Prostate gland (tissue), 2 donors: ENCODE measurements at regions of chr9 and their contacts with region 1.

Region 1: GRCh38 chr9:72827950-72828731 is 124.7 kb downstream of the ALDH1A1 start:
- DNase-seq: no peak
- H3K4me3 ChIP-seq: no peak overlapping the region
- H3K27ac ChIP-seq: no peak overlapping the region
- H3K4me1 ChIP-seq: no peaks in the 10 kb centered on the region
- H3K27me3 ChIP-seq: no peaks in the 10 kb centered on the region
- CTCF ChIP-seq: no peak
- POLR2A ChIP-seq: no peak

Region 2: DNA sequence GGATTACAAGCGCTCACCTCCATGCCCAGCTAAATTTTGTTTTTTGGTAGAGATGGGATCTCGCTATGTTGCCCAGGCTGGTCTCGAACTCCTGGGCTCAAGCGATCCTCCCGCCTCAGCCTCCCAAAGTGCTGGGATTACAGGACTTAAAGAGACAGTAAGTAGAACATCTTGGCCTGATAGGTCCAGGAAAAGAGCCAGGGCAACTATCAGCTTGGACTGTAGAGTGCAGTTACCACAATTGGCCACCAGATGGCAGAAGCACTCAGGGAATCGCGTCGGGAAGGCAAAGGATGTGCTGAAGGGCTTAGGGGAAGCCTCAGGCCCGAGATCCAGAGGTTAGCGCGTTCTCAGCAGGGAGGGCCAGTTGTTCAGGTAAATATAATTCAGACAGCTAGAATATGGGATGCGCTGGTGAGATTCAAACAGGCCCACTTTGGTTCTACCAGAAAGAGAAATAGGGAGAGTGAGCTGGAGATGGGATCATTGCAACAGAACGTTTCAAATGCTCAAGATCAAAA is 789.2 kb before region 1 on chr9:
- intact Hi-C with region 1: loop called (anchors 10 kb)
- DNase-seq: peak; percentile 65
- H3K4me3 ChIP-seq: no peak overlapping the region
- H3K27ac ChIP-seq: no peak overlapping the region
- H3K4me1 ChIP-seq: no peaks in the 10 kb centered on the region
- H3K27me3 ChIP-seq: no peaks in the 10 kb centered on the region
- CTCF ChIP-seq: peak; percentile 86 to 97 (median 94)
- POLR2A ChIP-seq: no peak

Region 3: GRCh38 chr9:72280913-72281500 is 547.1 kb before region 1 on chr9:
- intact Hi-C with region 1: loop called (anchors 5 kb)
- DNase-seq: peak; percentile 74
- H3K4me3 ChIP-seq: no peak overlapping the region
- H3K27ac ChIP-seq: no peak overlapping the region
- H3K4me1 ChIP-seq: no peaks in the 10 kb centered on the region
- H3K27me3 ChIP-seq: no peaks in the 10 kb centered on the region
- CTCF ChIP-seq: peak; percentile 52 to 91 (median 84)
- POLR2A ChIP-seq: no peak

Region 4: DNA sequence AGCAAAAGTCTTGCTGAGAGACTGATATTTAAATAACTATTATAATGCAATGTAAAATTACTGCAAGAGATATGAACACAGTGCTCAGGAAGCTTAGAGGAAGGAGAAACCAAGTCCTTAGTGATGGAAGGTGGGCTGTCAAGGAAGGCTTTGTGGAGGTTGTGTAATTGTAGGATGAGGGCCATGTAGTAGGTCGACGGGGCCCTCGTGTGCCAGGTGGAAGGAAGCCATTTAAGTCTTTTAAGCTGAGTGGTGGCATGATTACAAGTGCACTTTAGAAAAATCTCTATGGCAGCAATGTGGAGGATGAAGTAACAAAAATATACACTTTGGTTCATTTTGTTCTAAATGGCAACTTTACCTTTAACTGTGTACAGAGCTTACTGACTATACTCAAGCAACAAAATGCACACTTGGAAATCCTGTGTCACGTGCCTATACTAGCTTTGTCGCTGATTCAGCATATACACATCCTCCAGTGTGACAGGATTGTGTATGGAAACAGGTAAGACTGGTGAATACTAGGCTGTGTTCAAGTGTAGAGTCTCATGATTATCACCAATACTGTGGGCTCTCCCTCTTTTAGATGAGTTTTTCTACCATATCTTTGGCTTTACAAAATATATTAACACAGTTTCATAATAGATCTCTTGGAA is 228.1 kb before region 1 on chr9:
- intact Hi-C with region 1: loop called (anchors 10 kb)
- DNase-seq: no peak
- H3K4me3 ChIP-seq: no peak overlapping the region
- H3K27ac ChIP-seq: no peak overlapping the region
- H3K4me1 ChIP-seq: no peaks in the 10 kb centered on the region
- H3K27me3 ChIP-seq: no peaks in the 10 kb centered on the region
- CTCF ChIP-seq: no peak
- POLR2A ChIP-seq: no peak

Region 5: DNA sequence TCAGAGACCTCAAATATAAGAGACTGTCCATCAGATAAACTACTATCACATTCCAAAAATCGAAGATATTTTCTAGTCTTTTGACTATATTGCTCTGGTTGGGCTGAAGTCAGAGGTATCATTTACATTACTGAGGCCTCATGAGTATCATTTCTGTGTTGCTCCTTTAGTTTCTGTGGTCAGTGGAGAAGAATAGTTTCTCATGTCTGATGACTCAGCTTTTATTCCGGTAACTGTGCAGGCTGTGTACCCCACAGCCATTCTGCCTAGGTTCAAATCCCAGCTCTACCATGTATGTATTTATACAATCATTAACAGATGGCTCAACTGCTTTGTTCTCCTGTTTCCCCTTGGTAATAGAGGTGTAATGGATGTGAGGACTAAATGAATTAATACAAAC is 54.6 kb before region 1 on chr9:
- intact Hi-C with region 1: no loop called
- DNase-seq: no peak
- H3K4me3 ChIP-seq: no peak overlapping the region
- H3K27ac ChIP-seq: no peak overlapping the region
- H3K4me1 ChIP-seq: no peaks in the 10 kb centered on the region
- H3K27me3 ChIP-seq: no peaks in the 10 kb centered on the region
- CTCF ChIP-seq: no peak
- POLR2A ChIP-seq: no peak